HAP-1 (cell line): ENCODE measurements at regions of chr19 and their contacts with region 1.

Region 1: DNA sequence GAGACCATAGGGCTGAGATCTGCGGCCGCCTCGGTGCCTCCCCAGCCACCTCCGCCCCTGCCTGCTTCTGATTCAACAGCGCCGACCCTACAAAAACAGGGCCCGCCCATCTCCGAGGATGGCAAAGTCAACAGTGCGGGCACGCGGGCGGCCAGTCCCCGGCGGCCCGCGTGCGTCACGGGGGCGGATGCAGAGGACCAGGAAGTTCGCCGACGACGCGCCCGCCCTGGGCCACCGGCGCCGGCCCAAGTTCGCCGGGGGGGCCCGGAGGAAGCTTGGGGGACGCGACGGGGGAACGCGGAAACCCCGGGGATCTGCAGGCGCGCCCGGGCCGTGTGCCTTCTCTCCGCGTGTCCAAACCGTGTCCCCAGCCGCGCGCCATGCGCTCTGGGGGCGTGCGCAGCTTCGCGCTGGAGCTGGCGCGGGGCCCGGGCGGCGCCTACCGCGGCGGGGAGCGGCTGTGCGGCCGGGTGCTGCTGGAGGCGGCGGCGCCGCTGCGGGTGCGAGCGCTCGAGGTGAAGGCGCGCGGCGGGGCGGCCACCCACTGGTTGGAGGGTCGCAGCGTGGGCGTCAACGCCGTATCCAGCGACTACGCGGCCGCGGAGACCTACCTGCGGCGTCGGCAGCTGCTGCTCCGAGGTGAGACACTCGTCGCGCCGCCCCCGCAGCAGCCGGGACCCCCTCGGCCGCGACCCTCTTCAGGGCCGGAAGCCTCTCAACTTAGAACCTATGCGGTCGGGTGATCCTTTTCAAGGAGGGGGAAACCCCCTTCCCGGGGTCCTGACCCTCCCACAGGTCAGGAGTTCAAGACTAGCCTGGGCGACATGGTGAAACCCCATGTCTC is 6.8 kb upstream of the ARRDC2 start:
- DNase-seq: peak; percentile 34 to 86
- H3K4me3 ChIP-seq: peak overlapping the region; percentile 54
- H3K4me1 ChIP-seq: peaks cover 6% of the 10 kb centered on the region; the same call in 1 of the 2 replicates
- H3K27me3 ChIP-seq: no peaks in the 10 kb centered on the region

Region 2: DNA sequence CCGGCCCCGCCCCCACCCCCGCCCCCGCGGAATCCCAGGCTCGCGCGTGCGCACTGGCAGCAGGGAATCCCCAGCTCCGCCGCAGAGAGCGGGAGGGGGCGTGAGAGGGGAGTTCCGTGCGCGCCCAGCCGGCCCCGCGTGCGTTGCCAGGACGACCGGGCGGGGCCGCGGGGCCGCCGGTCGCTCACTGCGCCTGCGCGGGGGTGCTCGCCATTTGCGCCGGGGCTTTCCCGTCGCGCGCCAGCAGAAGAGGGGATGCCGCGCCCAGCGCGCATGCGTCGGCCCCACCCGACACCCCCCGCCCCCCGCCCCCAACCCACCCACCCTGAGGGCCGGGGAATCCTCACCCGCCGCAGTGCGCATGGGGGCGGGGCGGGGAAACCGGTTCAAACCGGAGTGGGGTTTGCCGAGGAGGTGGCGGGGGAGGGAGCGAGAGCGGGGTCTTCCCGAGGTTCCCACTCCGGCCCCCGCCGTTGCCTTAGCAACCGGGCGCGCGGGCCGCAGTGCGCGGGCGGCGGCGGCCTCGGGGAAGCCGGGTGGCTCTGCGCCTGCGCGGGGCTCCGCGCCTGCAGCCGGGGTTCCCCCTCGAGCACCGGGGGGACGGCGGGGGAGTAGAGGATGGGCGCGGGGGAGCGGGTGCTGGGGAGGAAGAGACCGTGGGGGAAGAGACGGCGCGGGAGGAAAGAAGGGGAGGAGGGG is 53.2 kb before region 1 on chr19:
- in situ Hi-C with region 1: loop called (anchors 10 kb)
- DNase-seq: peak; percentile 93 to 99
- H3K4me3 ChIP-seq: peak overlapping the region; percentile 18
- H3K4me1 ChIP-seq: peaks cover 34% of the 10 kb centered on the region
- H3K27me3 ChIP-seq: no peaks in the 10 kb centered on the region

Region 3: GRCh38 chr19:18063463-18063862 is 62.3 kb after region 1 on chr19:
- in situ Hi-C with region 1: loop called (anchors 5 kb)
- DNase-seq: no peak
- H3K4me3 ChIP-seq: no peak overlapping the region
- H3K4me1 ChIP-seq: no peaks in the 10 kb centered on the region
- H3K27me3 ChIP-seq: no peaks in the 10 kb centered on the region